CD4-positive, alpha-beta memory T cell (primary cell): ENCODE measurements at regions of chr19 and their contacts with region 1.

Region 1: DNA sequence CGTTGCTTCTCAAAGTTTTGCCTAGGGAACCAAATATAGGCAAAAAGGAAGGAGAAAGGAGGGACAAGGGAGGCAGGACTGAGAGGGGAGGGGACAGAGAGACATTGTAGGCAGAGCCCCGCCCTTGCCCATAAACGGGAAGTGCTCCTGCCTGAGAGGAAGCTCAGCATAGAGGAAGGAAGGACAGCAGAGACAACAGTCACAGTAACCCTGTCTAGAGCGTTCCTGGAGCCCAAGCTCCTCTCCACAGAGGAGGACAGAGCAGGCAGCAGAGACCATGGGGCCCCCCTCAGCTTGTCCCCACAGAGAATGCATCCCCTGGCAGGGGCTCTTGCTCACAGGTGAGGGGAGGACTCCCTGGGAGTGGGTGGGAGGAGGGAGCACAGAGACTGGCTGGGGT is at the start of gene CEACAM21:
- DNase-seq: peak in 1 of 5 donors; percentile 59
- H3K4me3 ChIP-seq: peak within 1 kb of the TSS in 1 of 2 donors; percentile 35
- H3K4me3 Mint-ChIP-seq: peak within 1 kb of the TSS; percentile 54 to 83 (median 68)
- H3K27ac ChIP-seq: peak within 1 kb of the TSS; percentile 8
- H3K27ac Mint-ChIP-seq: peak within 1 kb of the TSS; percentile 73 to 91 (median 84)
- H3K4me1 ChIP-seq: peaks cover 22% of the 10 kb centered on the region
- H3K4me1 Mint-ChIP-seq: peaks cover 21 to 36% (median 28%) of the 10 kb centered on the region in 4 donors
- H3K27me3 ChIP-seq: no peaks in the 10 kb centered on the region
- H3K27me3 Mint-ChIP-seq: no peaks in the 10 kb centered on the region
- total RNA-seq, gene CEACAM21: 42.8 to 48.7 TPM

Region 2: GRCh38 chr19:41554907-41555306 is 21.1 kb before region 1 on chr19:
- CTCF ChIA-PET with region 1: interaction called, 561 read pairs
- POLR2A ChIA-PET with region 1: interaction called, 547 read pairs
- intact Hi-C with region 1: no loop called
- DNase-seq: peak; percentile 64 to 78 (median 66)
- H3K4me3 ChIP-seq: peak overlapping the region in 1 of 2 donors; percentile 37
- H3K4me3 Mint-ChIP-seq: peak overlapping the region; percentile 56 to 100 (median 98)
- H3K27ac ChIP-seq: peak overlapping the region; percentile 63
- H3K27ac Mint-ChIP-seq: peak overlapping the region; percentile 66 to 95 (median 88)
- H3K4me1 ChIP-seq: peaks cover 72% of the 10 kb centered on the region
- H3K4me1 Mint-ChIP-seq: peaks cover 45 to 84% (median 62%) of the 10 kb centered on the region in 4 donors
- H3K27me3 ChIP-seq: no peaks in the 10 kb centered on the region
- H3K27me3 Mint-ChIP-seq: no peaks in the 10 kb centered on the region

Region 3: GRCh38 chr19:41563854-41564514 is 12.0 kb before region 1 on chr19:
- CTCF ChIA-PET with region 1: interaction called, 21 read pairs
- POLR2A ChIA-PET with region 1: interaction called, 141 read pairs
- intact Hi-C with region 1: no loop called
- DNase-seq: peak in 4 of 5 donors; percentile 58 to 88 (median 66)
- H3K4me3 ChIP-seq: peak overlapping the region in 1 of 2 donors; percentile 36
- H3K4me3 Mint-ChIP-seq: peak overlapping the region; percentile 31 to 85 (median 70)
- H3K27ac ChIP-seq: peak overlapping the region; percentile 28
- H3K27ac Mint-ChIP-seq: peak overlapping the region in 6 of 7 donors; percentile 82 to 94 (median 88)
- H3K4me1 ChIP-seq: peaks cover 75% of the 10 kb centered on the region
- H3K4me1 Mint-ChIP-seq: peaks cover 54 to 91% (median 70%) of the 10 kb centered on the region in 4 donors
- H3K27me3 ChIP-seq: no peaks in the 10 kb centered on the region
- H3K27me3 Mint-ChIP-seq: no peaks in the 10 kb centered on the region

Region 4: GRCh38 chr19:41597600-41598041 is 21.6 kb after region 1 on chr19:
- CTCF ChIA-PET with region 1: interaction called, 59 read pairs
- POLR2A ChIA-PET with region 1: interaction called, 4 read pairs
- intact Hi-C with region 1: loop called (anchors 1 kb)
- DNase-seq: peak; percentile 69 to 77 (median 74)
- H3K4me3 ChIP-seq: no peak overlapping the region
- H3K4me3 Mint-ChIP-seq: peak overlapping the region in 2 of 8 donors; percentile 49 to 76
- H3K27ac ChIP-seq: no peak overlapping the region
- H3K27ac Mint-ChIP-seq: peak overlapping the region in 2 of 7 donors; percentile 59 to 63
- H3K4me1 ChIP-seq: peaks cover 9% of the 10 kb centered on the region
- H3K4me1 Mint-ChIP-seq: peaks cover 7 to 11% (median 11%) of the 10 kb centered on the region in 4 donors
- H3K27me3 ChIP-seq: peaks cover 8% of the 10 kb centered on the region
- H3K27me3 Mint-ChIP-seq: peaks cover 10 to 11% of the 10 kb centered on the region in 2 donors

Region 5: DNA sequence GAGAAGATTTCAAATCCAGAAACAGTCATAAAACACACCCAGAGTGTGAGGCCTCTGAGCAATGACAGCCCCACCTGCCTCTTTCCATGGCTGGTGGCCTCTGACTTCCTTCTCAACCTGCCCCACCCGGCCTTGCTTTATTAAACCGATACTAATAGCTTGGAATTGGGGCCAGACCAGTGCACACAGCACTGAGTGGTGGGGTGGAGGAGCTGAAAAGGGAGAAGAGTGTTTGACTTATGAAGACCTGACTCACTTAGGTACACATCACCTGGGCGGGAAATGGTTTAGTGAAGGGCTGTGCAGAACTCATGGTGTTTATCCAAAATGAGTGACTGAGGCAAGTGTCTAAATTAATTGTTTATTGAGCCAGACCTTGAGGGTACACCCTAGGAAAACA is 158.6 kb after region 1 on chr19:
- CTCF ChIA-PET with region 1: no interaction called
- POLR2A ChIA-PET with region 1: no interaction called
- intact Hi-C with region 1: no loop called
- DNase-seq: no peak
- H3K4me3 ChIP-seq: no peak overlapping the region
- H3K4me3 Mint-ChIP-seq: no peak overlapping the region
- H3K27ac ChIP-seq: no peak overlapping the region
- H3K27ac Mint-ChIP-seq: no peak overlapping the region
- H3K4me1 ChIP-seq: no peaks in the 10 kb centered on the region
- H3K4me1 Mint-ChIP-seq: peaks cover 0 to 4% (median 0%) of the 10 kb centered on the region in 4 donors
- H3K27me3 ChIP-seq: no peaks in the 10 kb centered on the region
- H3K27me3 Mint-ChIP-seq: peaks cover 23 to 24% of the 10 kb centered on the region in 2 donors